ENCODE measurements at regions of chr7 and their contacts with region 1.

Region 1: DNA sequence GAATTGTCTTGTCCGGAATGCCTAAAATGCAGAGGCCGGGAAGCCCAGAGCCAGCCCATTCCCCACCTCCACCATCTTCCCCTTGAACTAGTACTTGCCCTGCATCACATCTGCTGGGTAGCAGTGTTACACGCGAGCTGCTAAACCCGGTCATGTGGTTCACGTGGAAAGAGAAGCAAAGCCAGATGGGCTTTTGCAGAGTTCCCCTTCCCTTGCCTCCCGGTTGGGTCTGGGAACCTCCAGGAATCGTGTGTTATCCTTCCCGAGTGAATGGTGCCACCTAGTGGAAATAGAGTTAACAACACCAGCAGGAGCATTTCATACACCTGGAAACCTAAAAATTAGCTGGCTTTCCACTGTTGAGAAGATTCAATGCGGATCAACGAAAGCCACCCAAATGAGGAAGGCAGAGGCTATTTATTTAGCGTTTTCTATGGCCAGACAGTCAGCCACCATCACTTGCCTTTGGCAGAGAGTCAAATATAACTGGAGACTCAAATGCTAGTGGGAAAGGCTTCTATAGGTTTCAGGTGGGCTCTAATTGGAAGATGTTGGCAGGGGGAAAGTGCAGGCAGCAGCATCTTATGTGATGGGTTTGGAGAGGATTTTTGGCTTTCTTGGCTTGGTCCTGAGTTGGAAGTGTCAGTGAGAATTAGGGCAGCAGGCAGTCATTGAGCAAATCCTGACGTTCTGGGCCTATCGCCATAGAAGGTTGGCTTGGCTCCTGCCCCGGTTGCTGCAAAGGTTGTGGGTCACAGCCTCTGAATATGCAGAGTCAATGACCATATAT is 12.9 kb upstream of the DENND2A start:
- DNase-seq: peak; percentile 30
- H3K4me3 Mint-ChIP-seq: no peak overlapping the region
- H3K27ac Mint-ChIP-seq: no peak overlapping the region
- H3K4me1 Mint-ChIP-seq: peaks cover 15% of the 10 kb centered on the region
- H3K27me3 Mint-ChIP-seq: peaks cover 2% of the 10 kb centered on the region

Region 2: GRCh38 chr7:140517546-140518369 is 135.8 kb before region 1 on chr7:
- CTCF ChIA-PET with region 1: interaction called, 30 read pairs
- intact Hi-C with region 1: loop called (anchors 1 kb)
- DNase-seq: peak; percentile 86
- H3K4me3 Mint-ChIP-seq: no peak overlapping the region
- H3K27ac Mint-ChIP-seq: no peak overlapping the region
- H3K4me1 Mint-ChIP-seq: peaks cover 5% of the 10 kb centered on the region
- H3K27me3 Mint-ChIP-seq: no peaks in the 10 kb centered on the region

Region 3: DNA sequence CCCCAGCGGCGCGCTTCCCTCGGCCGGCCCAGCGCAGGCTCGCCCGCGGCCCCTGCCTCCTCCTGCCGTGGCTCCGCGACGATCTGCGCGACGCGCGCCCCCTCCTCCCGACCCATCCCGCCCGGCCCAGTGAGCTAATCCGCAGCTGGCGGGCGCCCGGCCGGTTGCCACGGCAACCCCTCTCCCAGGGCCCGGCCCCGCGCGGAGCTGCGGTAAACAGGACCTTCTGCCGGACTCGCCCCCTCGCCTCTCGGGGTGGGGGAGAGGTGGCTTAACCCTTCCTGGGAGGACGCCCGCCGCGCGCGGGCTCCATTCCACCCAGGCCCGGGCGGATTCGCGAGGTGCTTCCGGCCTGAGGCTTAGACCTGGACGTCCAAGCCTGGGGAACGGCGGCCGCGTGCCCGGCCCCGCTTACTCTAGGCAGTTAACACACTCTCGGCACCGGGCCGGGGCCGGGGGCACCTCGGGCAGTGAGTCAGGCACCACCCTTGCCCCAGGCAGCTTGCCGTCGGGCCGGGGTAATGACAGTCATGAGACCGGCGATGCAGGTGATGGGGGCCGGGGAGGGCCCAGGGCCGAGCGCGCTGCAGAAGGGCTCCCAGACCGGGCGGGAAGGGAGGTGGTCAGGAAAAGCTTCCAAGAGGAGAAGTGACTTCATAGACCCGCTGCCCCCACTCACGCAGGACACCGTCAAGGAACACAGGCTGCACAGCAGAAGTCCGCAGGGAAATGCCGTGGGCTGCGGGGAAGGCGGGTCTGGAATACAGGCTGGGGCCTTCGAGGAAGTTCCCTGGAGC is 12.6 kb before region 1 on chr7 and contains the start of gene DENND2A:
- CTCF ChIA-PET with region 1: interaction called, 13 read pairs
- intact Hi-C with region 1: no loop called
- DNase-seq: no peak
- H3K4me3 Mint-ChIP-seq: peak within 1 kb of the TSS; percentile 73
- H3K27ac Mint-ChIP-seq: no peak within 1 kb of the TSS
- H3K4me1 Mint-ChIP-seq: peaks cover 15% of the 10 kb centered on the region
- H3K27me3 Mint-ChIP-seq: peaks cover 53% of the 10 kb centered on the region
- total RNA-seq, gene DENND2A: not detected

Measured in activated naive CD4-positive, alpha-beta T cell treated with anti-CD3 and anti-CD28 coated beads for 36 hours (primary cell).